AG04450 (cell line): ENCODE measurements at regions of chr4 and their contacts with region 1.

Region 1: DNA sequence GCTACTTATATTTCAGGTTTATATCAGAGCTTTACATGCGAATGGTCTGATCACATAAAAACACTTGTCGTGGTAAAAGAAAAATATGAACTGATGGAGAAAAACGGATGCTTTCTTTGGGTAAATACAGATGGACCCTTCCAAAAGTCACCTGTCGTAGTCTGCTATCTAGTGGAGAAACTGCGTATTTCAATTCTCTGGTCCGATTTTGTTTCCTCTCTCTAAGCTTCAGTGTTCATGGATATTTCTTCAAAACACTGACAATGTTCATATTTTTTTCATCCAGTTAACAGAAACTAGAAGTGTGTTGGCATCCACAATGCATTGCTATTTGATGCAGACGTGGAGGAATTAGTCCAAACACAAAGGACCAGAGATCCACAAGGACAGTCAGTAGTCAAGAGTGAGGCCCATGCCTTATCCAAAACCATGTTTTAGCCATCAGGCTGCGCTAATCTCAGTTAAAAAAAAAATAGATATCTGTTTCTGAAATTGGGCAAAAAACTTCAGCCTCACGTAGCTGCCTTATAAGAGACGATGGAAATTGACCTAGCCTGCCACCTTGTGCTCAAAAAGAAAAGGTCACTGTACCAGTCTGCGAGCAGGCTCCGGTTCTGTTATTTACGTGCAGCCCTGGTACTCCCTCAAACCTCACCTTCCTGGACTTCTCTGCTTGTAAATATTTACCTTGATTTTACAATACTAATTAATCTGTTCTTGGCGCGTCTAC is 16.0 kb downstream of the MEPE start:
- DNase-seq: peak; percentile 11
- H3K4me3 ChIP-seq: no peak overlapping the region
- H3K27ac ChIP-seq: no peak overlapping the region
- H3K27me3 ChIP-seq: peaks cover 2% of the 10 kb centered on the region
- CTCF ChIP-seq: peak; percentile 65

Region 2: GRCh38 chr4:87543835-87544461 is 304.8 kb before region 1 on chr4:
- CTCF ChIA-PET with region 1: interaction called, 30 read pairs
- POLR2A ChIA-PET with region 1: no interaction called
- DNase-seq: no peak
- H3K4me3 ChIP-seq: no peak overlapping the region
- H3K27ac ChIP-seq: no peak overlapping the region
- H3K27me3 ChIP-seq: peaks cover 6% of the 10 kb centered on the region
- CTCF ChIP-seq: peak; percentile 67

Region 3: DNA sequence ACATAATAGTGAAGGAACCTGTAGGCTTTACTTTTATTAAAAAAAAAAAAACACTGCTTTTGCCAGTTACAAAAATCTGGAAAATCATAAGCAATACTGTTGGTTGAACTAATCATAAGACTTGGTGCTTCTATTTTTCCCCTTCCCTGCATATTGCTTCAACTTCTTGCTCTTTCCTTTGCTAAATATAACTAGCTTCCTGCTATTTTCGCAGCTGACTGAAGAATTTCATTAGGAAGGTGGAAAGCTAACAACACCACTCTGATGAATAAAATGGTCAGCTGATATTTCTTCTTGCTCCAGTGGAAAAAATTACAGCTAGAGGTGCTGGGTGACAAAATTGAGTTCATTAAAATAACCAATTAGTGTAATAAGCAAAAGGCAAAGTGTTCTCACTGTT is 23.2 kb after region 1 on chr4:
- CTCF ChIA-PET with region 1: interaction called, 10 read pairs
- POLR2A ChIA-PET with region 1: no interaction called
- DNase-seq: no peak
- H3K4me3 ChIP-seq: no peak overlapping the region
- H3K27ac ChIP-seq: no peak overlapping the region
- H3K27me3 ChIP-seq: no peaks in the 10 kb centered on the region
- CTCF ChIP-seq: no peak

Region 4: GRCh38 chr4:87985097-87985886 is 136.5 kb after region 1 on chr4:
- CTCF ChIA-PET with region 1: interaction called, 11 read pairs
- POLR2A ChIA-PET with region 1: no interaction called
- DNase-seq: no peak
- H3K4me3 ChIP-seq: no peak overlapping the region
- H3K27ac ChIP-seq: no peak overlapping the region
- H3K27me3 ChIP-seq: peaks cover 4% of the 10 kb centered on the region
- CTCF ChIP-seq: peak; percentile 49

Region 5: GRCh38 chr4:88054901-88055300 is 206.1 kb after region 1 on chr4:
- CTCF ChIA-PET with region 1: interaction called, 11 read pairs
- POLR2A ChIA-PET with region 1: no interaction called
- DNase-seq: peak; percentile 38
- H3K4me3 ChIP-seq: no peak overlapping the region
- H3K27ac ChIP-seq: no peak overlapping the region
- H3K27me3 ChIP-seq: no peaks in the 10 kb centered on the region
- CTCF ChIP-seq: peak; percentile 76

Region 6: GRCh38 chr4:88333741-88334405 is 485.1 kb after region 1 on chr4:
- CTCF ChIA-PET with region 1: no interaction called
- POLR2A ChIA-PET with region 1: no interaction called
- DNase-seq: no peak
- H3K4me3 ChIP-seq: no peak overlapping the region
- H3K27ac ChIP-seq: no peak overlapping the region
- H3K27me3 ChIP-seq: no peaks in the 10 kb centered on the region
- CTCF ChIP-seq: no peak